K562 (cell line): ENCODE measurements at regions of chr7 and their contacts with region 1.

Region 1: GRCh38 chr7:66557608-66558143 is 71.0 kb upstream of the KCTD7 start:
- DNase-seq: peak; percentile 74 to 79 (median 77)
- ATAC-seq: peak; percentile 95
- H3K4me3 ChIP-seq: no peak overlapping the region
- H3K27ac ChIP-seq: no peak overlapping the region
- H3K4me1 ChIP-seq: peaks cover 0 to 19% of the 10 kb centered on the region in 2 experiments; a peak in 2 of 5 replicates
- H3K27me3 ChIP-seq: no peaks in the 10 kb centered on the region
- CTCF ChIP-seq: peak; percentile 90 to 96 (median 90)
- EP300 ChIP-seq: no peak
- POLR2A ChIP-seq: no peak
- RAD21 ChIP-seq: peak; percentile 78 to 89

Region 2: GRCh38 chr7:66669088-66669487 is 111.4 kb after region 1 on chr7:
- CTCF ChIA-PET with region 1: no interaction called
- POLR2A ChIA-PET with region 1: no interaction called
- in situ Hi-C with region 1: no loop called
- intact Hi-C with region 1: no loop called
- DNase-seq: no peak
- ATAC-seq: no peak
- H3K4me3 ChIP-seq: no peak overlapping the region
- H3K27ac ChIP-seq: no peak overlapping the region
- H3K4me1 ChIP-seq: peaks cover 14 to 20% of the 10 kb centered on the region in 2 experiments; a peak in 4 of 5 replicates
- H3K27me3 ChIP-seq: no peaks in the 10 kb centered on the region
- CTCF ChIP-seq: no peak
- EP300 ChIP-seq: no peak
- POLR2A ChIP-seq: no peak
- RAD21 ChIP-seq: no peak

Region 3: GRCh38 chr7:66740302-66740979 is 182.8 kb after region 1 on chr7 and contains the start of gene RABGEF1:
- CTCF ChIA-PET with region 1: no interaction called
- POLR2A ChIA-PET with region 1: no interaction called
- in situ Hi-C with region 1: no loop called
- intact Hi-C with region 1: loop called (anchors 10 kb)
- DNase-seq: peak; percentile 98 to 100 (median 98)
- ATAC-seq: peak; percentile 95
- H3K4me3 ChIP-seq: peak within 1 kb of the TSS; percentile 72
- H3K27ac ChIP-seq: peak within 1 kb of the TSS; percentile 80
- H3K4me1 ChIP-seq: peaks cover 2 to 32% of the 10 kb centered on the region in 2 experiments; a peak in 3 of 5 replicates
- H3K27me3 ChIP-seq: no peaks in the 10 kb centered on the region
- CTCF ChIP-seq: peak in 1 of 3 experiments; percentile 5; a peak in 1 of 6 replicates
- EP300 ChIP-seq: no peak
- POLR2A ChIP-seq: peak; percentile 96
- RAD21 ChIP-seq: peak in 1 of 2 experiments; percentile 21; a peak in 1 of 4 replicates
- polyA plus RNA-seq, gene RABGEF1: 7.0 to 11.5 TPM

Region 4: GRCh38 chr7:66894463-66895080 is 336.9 kb after region 1 on chr7:
- CTCF ChIA-PET with region 1: no interaction called
- POLR2A ChIA-PET with region 1: no interaction called
- in situ Hi-C with region 1: no loop called
- intact Hi-C with region 1: loop called (anchors 5 kb)
- DNase-seq: peak in 1 of 4 experiments; percentile 37
- ATAC-seq: peak; percentile 77
- H3K4me3 ChIP-seq: no peak overlapping the region
- H3K27ac ChIP-seq: no peak overlapping the region
- H3K4me1 ChIP-seq: no peaks in the 10 kb centered on the region
- H3K27me3 ChIP-seq: no peaks in the 10 kb centered on the region
- CTCF ChIP-seq: peak; percentile 47 to 58 (median 52)
- EP300 ChIP-seq: no peak
- POLR2A ChIP-seq: no peak
- RAD21 ChIP-seq: peak; percentile 73 to 76

Region 5: GRCh38 chr7:67006971-67007370 is 449.3 kb after region 1 on chr7:
- CTCF ChIA-PET with region 1: no interaction called
- POLR2A ChIA-PET with region 1: no interaction called
- in situ Hi-C with region 1: no loop called
- intact Hi-C with region 1: loop called (anchors 10 kb)
- DNase-seq: peak in 1 of 4 experiments; percentile 25
- ATAC-seq: peak; percentile 90
- H3K4me3 ChIP-seq: no peak overlapping the region
- H3K27ac ChIP-seq: no peak overlapping the region
- H3K4me1 ChIP-seq: no peaks in the 10 kb centered on the region; a peak in 1 of 5 replicates
- H3K27me3 ChIP-seq: no peaks in the 10 kb centered on the region
- CTCF ChIP-seq: no peak
- EP300 ChIP-seq: no peak
- POLR2A ChIP-seq: no peak
- RAD21 ChIP-seq: no peak